MCF 10A (cell line): ENCODE measurements at regions of chr6 and their contacts with region 1.

Region 1: GRCh38 chr6:92810913-92811312 is 608.4 kb downstream of the EPHA7 start:
- DNase-seq: peak; percentile 51
- H3K4me3 Mint-ChIP-seq: no peak overlapping the region
- H3K27ac Mint-ChIP-seq: no peak overlapping the region
- H3K4me1 Mint-ChIP-seq: no peaks in the 10 kb centered on the region
- H3K27me3 Mint-ChIP-seq: peaks cover 23% of the 10 kb centered on the region
- CTCF ChIP-seq: peak; percentile 48

Region 2: DNA sequence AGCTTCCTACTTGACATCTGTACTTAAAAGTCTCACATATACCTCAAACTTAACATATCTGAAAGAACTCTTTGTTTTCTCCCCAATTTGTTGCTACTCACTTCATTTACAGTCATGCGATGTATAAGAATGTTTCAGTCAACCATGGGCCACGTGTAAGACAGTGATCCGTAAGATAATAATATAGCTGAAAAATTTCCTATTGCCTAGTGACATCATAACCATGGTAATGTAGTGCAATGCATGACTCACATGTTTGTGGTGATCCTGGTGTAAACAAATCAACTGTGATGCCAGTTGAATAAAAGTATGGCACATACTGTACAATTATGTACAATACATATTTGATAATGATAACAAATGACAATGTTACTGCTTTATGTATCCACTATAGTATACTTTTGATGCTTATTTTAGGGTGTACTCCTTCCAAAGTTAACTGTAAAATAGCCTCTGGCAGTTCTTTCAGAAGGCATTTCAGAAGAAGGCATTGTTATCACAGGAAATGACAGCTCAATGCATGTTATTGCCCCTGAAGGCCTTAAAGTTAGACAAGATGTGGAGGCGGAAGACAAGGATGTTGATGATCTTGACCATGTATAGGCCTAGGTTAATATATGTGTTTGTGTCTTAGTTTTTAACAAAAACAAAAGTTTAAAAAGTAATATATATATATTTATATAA is 29.5 kb after region 1 on chr6:
- CTCF ChIA-PET with region 1: interaction called, 3 read pairs
- POLR2A ChIA-PET with region 1: no interaction called
- intact Hi-C with region 1: loop called (anchors 1 kb)
- DNase-seq: no peak
- H3K4me3 Mint-ChIP-seq: no peak overlapping the region
- H3K27ac Mint-ChIP-seq: no peak overlapping the region
- H3K4me1 Mint-ChIP-seq: no peaks in the 10 kb centered on the region
- H3K27me3 Mint-ChIP-seq: no peaks in the 10 kb centered on the region
- CTCF ChIP-seq: no peak

Region 3: DNA sequence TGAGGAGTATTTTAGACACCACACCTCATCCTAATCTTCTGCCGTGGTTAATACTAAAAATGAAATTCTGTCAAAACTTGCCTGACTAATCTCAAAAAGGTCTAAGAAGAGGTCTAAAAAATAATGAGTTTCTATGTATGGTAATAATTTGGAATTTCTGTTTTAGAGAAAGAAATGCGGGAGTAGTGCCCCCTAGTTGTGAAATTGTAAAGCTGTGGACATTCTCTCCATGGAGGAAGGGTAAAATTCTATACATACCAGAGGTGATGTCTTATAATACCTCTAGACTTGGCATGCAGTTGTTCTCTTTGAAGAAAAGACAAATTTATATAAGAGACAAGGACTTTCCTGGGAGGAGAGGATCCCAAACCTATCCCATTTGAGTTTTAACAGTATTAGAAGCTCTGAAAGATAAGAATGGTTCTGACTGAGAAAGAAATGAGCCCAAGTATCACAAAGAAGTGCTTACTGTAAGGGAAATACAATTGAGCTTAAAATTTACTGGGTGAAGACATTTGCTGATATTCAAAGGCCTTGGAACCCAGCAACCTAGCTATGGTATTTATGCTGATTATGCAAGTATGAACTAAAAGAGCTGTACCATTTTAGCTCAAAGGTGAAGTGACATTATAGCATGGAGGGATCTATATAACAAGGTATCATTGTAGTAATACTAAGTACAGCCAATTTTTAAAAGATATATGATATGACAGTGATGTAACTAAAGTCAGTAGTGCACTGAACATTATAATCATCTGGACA is 613.6 kb after region 1 on chr6:
- CTCF ChIA-PET with region 1: interaction called, 6 read pairs
- POLR2A ChIA-PET with region 1: no interaction called
- intact Hi-C with region 1: loop called (anchors 1 kb)
- DNase-seq: peak; percentile 35
- H3K4me3 Mint-ChIP-seq: no peak overlapping the region
- H3K27ac Mint-ChIP-seq: no peak overlapping the region
- H3K4me1 Mint-ChIP-seq: no peaks in the 10 kb centered on the region
- H3K27me3 Mint-ChIP-seq: peaks cover 91% of the 10 kb centered on the region
- CTCF ChIP-seq: peak; percentile 45